Psoas muscle (tissue), 8 donors: ENCODE measurements at regions of chr6 and their contacts with region 1.

Region 1: GRCh38 chr6:69835414-69836179 is 30.8 kb upstream of the COL19A1 start:
- DNase-seq: no peak
- ATAC-seq: peak; percentile 62 to 81 (median 71)
- H3K4me3 ChIP-seq: no peak overlapping the region
- H3K27ac ChIP-seq: no peak overlapping the region
- H3K4me1 ChIP-seq: peaks cover 11% of the 10 kb centered on the region
- H3K27me3 ChIP-seq: no peaks in the 10 kb centered on the region
- CTCF ChIP-seq: peak; percentile 90

Region 2: GRCh38 chr6:70166088-70166958 is 330.7 kb after region 1 on chr6:
- intact Hi-C with region 1: loop called (anchors 2 to 10 kb)
- DNase-seq: peak; percentile 28 to 61
- ATAC-seq: peak; percentile 71 to 86 (median 83)
- H3K4me3 ChIP-seq: peak overlapping the region; percentile 9
- H3K27ac ChIP-seq: no peak overlapping the region
- H3K4me1 ChIP-seq: no peaks in the 10 kb centered on the region
- H3K27me3 ChIP-seq: no peaks in the 10 kb centered on the region
- CTCF ChIP-seq: peak; percentile 68